ENCODE measurements at regions of chr4 and their contacts with region 1.

Region 1: DNA sequence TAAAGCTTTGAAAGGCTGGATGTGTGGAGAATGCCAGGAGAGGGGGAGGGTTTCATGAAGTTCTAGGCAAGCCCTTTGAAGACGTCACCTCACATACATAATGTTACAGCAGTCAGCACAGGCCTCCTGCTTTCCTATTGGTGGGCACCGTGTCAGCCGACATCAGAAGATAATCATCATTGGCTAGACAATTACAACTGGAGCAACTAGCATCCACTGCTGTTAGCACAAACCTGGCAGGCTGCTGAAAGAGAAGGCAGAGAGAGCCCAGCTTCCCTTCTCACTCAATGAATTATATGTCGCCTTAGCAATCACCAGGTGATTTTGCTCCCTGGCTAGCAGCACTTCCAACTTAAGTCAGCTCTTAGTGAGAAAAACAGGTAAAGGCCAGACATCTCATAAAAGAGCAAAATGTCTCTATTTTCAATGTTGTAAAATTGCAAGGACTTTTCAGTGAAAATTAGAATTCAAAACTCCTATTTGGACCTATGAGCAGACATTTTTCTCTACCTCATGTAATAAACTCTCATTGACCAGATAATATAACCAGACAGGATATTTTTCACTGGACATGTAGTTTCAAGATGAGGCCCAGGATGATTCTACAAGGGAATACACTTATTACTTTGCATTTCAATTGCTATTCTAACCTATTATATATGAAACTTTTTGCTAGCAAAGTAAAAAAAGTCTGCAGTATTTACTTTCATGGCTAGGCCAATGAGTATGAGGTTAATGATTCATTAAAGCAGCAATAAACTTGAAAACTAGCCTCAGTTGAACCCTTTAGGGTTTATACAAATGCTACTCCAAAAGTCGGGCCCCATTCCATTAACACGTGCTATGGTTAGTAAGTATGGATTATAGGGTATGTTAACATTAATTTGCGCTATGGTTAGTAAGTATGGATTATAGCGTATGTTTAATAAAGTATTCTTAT is 4.3 kb downstream of the ELOVL6 start:
- DNase-seq: peak; percentile 88
- ATAC-seq: peak; percentile 87
- H3K4me3 Mint-ChIP-seq: peak overlapping the region; percentile 54
- H3K27ac Mint-ChIP-seq: peak overlapping the region; percentile 87
- H3K4me1 Mint-ChIP-seq: peaks cover 37% of the 10 kb centered on the region
- H3K27me3 Mint-ChIP-seq: no peaks in the 10 kb centered on the region

Region 2: GRCh38 chr4:109648266-109648996 is 545.7 kb before region 1 on chr4:
- CTCF ChIA-PET with region 1: no interaction called
- POLR2A ChIA-PET with region 1: no interaction called
- intact Hi-C with region 1: loop called in 1 of 2 experiments (anchors 10 kb)
- DNase-seq: no peak
- ATAC-seq: peak; percentile 34
- H3K4me3 Mint-ChIP-seq: peak overlapping the region; percentile 47
- H3K27ac Mint-ChIP-seq: peak overlapping the region; percentile 88
- H3K4me1 Mint-ChIP-seq: peaks cover 45% of the 10 kb centered on the region
- H3K27me3 Mint-ChIP-seq: no peaks in the 10 kb centered on the region

Region 3: GRCh38 chr4:109947457-109947856 is 246.6 kb before region 1 on chr4:
- CTCF ChIA-PET with region 1: no interaction called
- POLR2A ChIA-PET with region 1: no interaction called
- intact Hi-C with region 1: loop called in 1 of 2 experiments (anchors 5 kb)
- DNase-seq: no peak
- ATAC-seq: peak; percentile 85
- H3K4me3 Mint-ChIP-seq: no peak overlapping the region
- H3K27ac Mint-ChIP-seq: peak overlapping the region; percentile 74
- H3K4me1 Mint-ChIP-seq: peaks cover 54% of the 10 kb centered on the region
- H3K27me3 Mint-ChIP-seq: peaks cover 2% of the 10 kb centered on the region

Region 4: GRCh38 chr4:110055158-110055768 is 138.8 kb before region 1 on chr4:
- CTCF ChIA-PET with region 1: no interaction called
- POLR2A ChIA-PET with region 1: no interaction called
- intact Hi-C with region 1: loop called (anchors 2 to 5 kb)
- DNase-seq: peak; percentile 41
- ATAC-seq: peak; percentile 88
- H3K4me3 Mint-ChIP-seq: no peak overlapping the region
- H3K27ac Mint-ChIP-seq: no peak overlapping the region
- H3K4me1 Mint-ChIP-seq: peaks cover 24% of the 10 kb centered on the region
- H3K27me3 Mint-ChIP-seq: no peaks in the 10 kb centered on the region

Region 5: DNA sequence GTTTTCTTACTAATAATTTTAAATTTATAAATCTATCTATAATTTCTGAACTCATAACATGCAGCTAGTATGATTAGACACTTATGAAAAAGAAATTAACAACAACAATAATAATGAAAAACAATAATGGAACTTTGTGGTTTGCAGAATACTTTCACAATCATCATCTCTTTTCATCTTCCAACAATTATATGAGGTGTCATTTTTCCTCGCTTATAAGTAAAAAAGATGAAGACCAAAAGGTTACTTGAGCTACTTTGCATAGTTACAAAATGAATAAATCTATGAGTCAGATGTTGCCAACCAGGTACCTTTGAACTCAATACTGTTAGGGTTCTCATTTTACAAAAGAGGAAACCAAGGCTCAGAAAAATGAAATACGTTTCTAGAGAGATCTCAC is 102.8 kb after region 1 on chr4:
- CTCF ChIA-PET with region 1: no interaction called
- POLR2A ChIA-PET with region 1: no interaction called
- intact Hi-C with region 1: loop called in 1 of 2 experiments (anchors 2 kb)
- DNase-seq: no peak
- ATAC-seq: peak; percentile 87
- H3K4me3 Mint-ChIP-seq: no peak overlapping the region
- H3K27ac Mint-ChIP-seq: no peak overlapping the region
- H3K4me1 Mint-ChIP-seq: peaks cover 14% of the 10 kb centered on the region
- H3K27me3 Mint-ChIP-seq: peaks cover 32% of the 10 kb centered on the region